IMR-90 (cell line): ENCODE measurements at regions of chr3 and their contacts with region 1.

Region 1: DNA sequence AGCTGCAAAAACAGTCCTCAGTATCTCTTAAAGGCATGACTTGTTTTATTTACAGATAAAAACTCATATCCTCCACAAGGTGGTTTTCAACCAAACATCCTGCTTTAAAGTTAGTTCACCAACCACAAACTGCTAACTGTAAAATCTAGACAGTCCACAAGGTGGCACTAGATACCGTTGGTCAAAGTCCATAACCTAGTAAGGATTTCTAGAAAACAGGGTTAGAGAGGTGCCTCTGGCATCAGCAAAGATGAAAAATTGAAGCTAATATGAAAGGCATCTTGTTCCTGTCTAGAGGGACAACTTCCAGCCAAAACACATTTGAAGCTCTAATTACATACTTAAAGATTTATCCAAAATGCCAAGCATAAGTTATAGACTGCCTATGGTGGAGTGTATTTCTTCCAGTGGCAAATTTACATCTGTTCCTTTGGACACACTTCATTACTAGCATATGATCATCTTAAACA is 56.0 kb downstream of the ZMAT3 start:
- DNase-seq: peak; percentile 83
- ATAC-seq: peak; percentile 93
- H3K4me3 ChIP-seq: no peak overlapping the region
- H3K27ac ChIP-seq: no peak overlapping the region
- H3K4me1 ChIP-seq: peaks cover 3% of the 10 kb centered on the region
- H3K27me3 ChIP-seq: no peaks in the 10 kb centered on the region
- CTCF ChIP-seq: peak; percentile 89
- POLR2A ChIP-seq: no peak
- RAD21 ChIP-seq: peak; percentile 83

Region 2: GRCh38 chr3:178658694-178659325 is 356.8 kb before region 1 on chr3:
- CTCF ChIA-PET with region 1: no interaction called
- POLR2A ChIA-PET with region 1: no interaction called
- dilution Hi-C with region 1: no loop called
- in situ Hi-C with region 1: no loop called
- intact Hi-C with region 1: no loop called
- DNase-seq: no peak
- ATAC-seq: no peak
- H3K4me3 ChIP-seq: no peak overlapping the region
- H3K27ac ChIP-seq: no peak overlapping the region
- H3K4me1 ChIP-seq: no peaks in the 10 kb centered on the region
- H3K27me3 ChIP-seq: no peaks in the 10 kb centered on the region
- CTCF ChIP-seq: no peak
- POLR2A ChIP-seq: no peak
- RAD21 ChIP-seq: no peak

Region 3: GRCh38 chr3:179071550-179072397 is 56.2 kb after region 1 on chr3 and contains the start of gene ZMAT3:
- CTCF ChIA-PET with region 1: interaction called, 7 read pairs
- POLR2A ChIA-PET with region 1: no interaction called
- dilution Hi-C with region 1: no loop called
- in situ Hi-C with region 1: no loop called
- intact Hi-C with region 1: loop called (anchors 5 kb)
- DNase-seq: peak; percentile 82
- ATAC-seq: peak; percentile 95
- H3K4me3 ChIP-seq: peak within 1 kb of the TSS; percentile 90
- H3K27ac ChIP-seq: peak within 1 kb of the TSS; percentile 96
- H3K4me1 ChIP-seq: peaks cover 9% of the 10 kb centered on the region
- H3K27me3 ChIP-seq: no peaks in the 10 kb centered on the region
- CTCF ChIP-seq: no peak
- POLR2A ChIP-seq: peak; percentile 75
- RAD21 ChIP-seq: peak; percentile 8; the same call in 1 of the 2 replicates
- total RNA-seq, gene ZMAT3: 11.7 and 21.7 TPM in 2 replicates

Region 4: DNA sequence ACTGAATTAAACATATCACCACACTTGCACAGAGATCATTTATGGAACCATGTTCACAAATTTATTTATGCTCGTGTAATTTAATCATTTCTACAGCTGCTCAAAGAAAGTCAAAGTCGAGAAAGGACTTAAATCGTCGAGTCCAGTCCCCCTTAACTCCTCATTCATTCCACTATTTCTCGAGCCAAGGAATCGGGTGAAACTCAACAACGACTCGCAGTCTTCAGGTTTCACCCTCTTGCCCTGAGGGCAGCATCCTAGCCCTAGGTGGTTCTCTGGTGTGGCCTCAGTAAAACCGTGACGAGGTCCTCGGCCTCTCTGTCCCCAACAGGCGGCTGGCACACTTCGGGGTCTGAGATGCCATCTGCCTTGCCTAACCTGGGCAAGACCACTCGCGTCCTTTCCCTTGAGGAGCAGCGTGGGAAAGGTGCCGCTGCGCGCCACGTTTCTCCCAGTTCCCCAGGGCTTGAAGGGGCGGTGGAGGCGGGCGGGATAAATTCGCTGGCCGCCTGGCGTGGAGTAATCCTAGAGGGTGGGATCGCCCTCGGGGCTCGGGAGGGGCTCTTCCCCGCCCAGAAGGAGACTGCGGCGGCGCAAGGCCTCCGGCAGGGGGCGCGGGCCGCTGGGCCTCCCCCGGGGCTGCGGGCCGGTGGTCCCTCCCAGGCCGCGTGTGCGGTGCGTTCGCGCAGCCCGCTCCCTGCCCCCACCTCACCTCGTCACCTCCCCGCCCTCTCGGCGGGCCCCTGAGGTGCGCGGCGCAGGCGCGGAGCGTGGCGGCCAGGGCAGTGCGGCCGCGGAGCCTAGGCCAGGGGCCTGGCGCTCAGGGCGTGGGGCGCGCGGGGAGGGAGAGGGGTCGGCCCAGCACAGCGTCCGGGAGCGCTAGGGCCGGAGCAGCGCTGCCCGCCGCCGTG is 307.0 kb after region 1 on chr3 and contains the start of gene ZNF639:
- CTCF ChIA-PET with region 1: interaction called, 4 read pairs
- POLR2A ChIA-PET with region 1: no interaction called
- dilution Hi-C with region 1: no loop called
- in situ Hi-C with region 1: loop called (anchors 5 kb)
- intact Hi-C with region 1: no loop called
- DNase-seq: peak; percentile 82
- ATAC-seq: peak; percentile 90
- H3K4me3 ChIP-seq: peak within 1 kb of the TSS; percentile 97
- H3K27ac ChIP-seq: peak within 1 kb of the TSS; percentile 94
- H3K4me1 ChIP-seq: peaks cover 3% of the 10 kb centered on the region; the same call in 1 of the 2 replicates
- H3K27me3 ChIP-seq: no peaks in the 10 kb centered on the region
- CTCF ChIP-seq: peak; percentile 90
- POLR2A ChIP-seq: peak; percentile 77
- RAD21 ChIP-seq: peak; percentile 38; the same call in 1 of the 2 replicates
- total RNA-seq, gene ZNF639: 50.5 and 57.8 TPM in 2 replicates